ENCODE measurements at regions of chr12 and their contacts with region 1.

Region 1: DNA sequence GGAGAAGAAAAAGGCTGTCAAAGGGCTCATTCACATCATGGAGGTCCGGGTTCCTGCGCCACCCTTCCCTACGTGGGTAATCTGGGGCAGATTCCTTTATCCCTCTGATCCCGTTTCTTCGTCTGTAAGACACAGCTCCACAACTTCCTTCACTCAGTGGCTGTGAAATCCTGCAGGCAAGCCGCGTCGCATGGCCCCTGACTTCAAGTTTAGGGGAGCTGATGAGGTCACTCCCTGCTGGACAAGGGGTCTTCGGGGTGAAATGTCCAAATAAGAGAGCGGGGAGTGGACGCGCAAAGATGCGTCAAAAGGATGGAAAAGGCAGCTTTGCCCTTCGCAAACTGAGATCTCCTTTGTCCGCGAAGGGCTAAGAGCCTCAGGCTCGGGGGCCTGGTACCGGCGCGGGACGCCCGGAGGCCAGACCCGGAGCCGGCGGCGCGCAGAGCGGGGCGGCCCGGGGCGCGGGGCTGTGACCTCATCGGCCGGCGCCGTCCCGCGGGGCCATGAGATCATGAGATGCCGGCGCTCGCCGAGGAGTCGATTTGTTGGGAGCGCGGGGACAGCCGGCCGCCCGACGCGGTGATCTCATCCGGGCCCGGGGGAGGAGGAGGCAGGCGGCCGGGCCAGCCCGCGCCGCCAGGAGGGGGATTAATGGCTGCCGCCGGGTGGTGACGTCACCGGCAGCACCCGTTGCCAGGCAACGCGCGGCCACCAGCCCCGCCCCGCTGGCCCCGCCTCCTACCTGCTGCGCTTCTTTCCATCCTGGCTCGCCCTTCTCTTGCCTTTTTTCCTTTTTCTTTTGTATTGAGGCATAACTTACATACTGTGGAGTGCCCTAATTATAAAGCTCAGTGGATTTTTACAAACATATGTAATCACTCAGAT is 62.1 kb downstream of the HRK start:
- DNase-seq: peak; percentile 94
- ATAC-seq: peak; percentile 96
- H3K4me3 Mint-ChIP-seq: peak overlapping the region; percentile 91
- H3K27ac Mint-ChIP-seq: peak overlapping the region; percentile 95
- H3K4me1 Mint-ChIP-seq: peaks cover 16% of the 10 kb centered on the region
- H3K27me3 Mint-ChIP-seq: no peaks in the 10 kb centered on the region

Region 2: GRCh38 chr12:116737774-116738700 is 81.2 kb before region 1 on chr12 and contains the starts of genes RNFT2 and SPRING1:
- CTCF ChIA-PET with region 1: no interaction called
- POLR2A ChIA-PET with region 1: no interaction called
- intact Hi-C with region 1: loop called (anchors 1 kb)
- DNase-seq: peak; percentile 99
- ATAC-seq: peak; percentile 99
- H3K4me3 Mint-ChIP-seq: peak within 1 kb of the TSS; percentile 85
- H3K27ac Mint-ChIP-seq: peak within 1 kb of the TSS; percentile 61
- H3K4me1 Mint-ChIP-seq: peaks cover 22% of the 10 kb centered on the region
- H3K27me3 Mint-ChIP-seq: no peaks in the 10 kb centered on the region
- total RNA-seq, gene RNFT2: 14.7 to 15.0 TPM
- total RNA-seq, gene SPRING1: 15.3 to 17.4 TPM

Region 3: GRCh38 chr12:116955382-116956021 is 136.3 kb after region 1 on chr12:
- CTCF ChIA-PET with region 1: no interaction called
- POLR2A ChIA-PET with region 1: no interaction called
- intact Hi-C with region 1: loop called in 1 of 2 experiments (anchors 1 kb)
- DNase-seq: peak; percentile 14
- ATAC-seq: no peak
- H3K4me3 Mint-ChIP-seq: no peak overlapping the region
- H3K27ac Mint-ChIP-seq: no peak overlapping the region
- H3K4me1 Mint-ChIP-seq: peaks cover 21% of the 10 kb centered on the region
- H3K27me3 Mint-ChIP-seq: no peaks in the 10 kb centered on the region

Region 4: GRCh38 chr12:117002051-117002817 is 183.0 kb after region 1 on chr12:
- CTCF ChIA-PET with region 1: no interaction called
- POLR2A ChIA-PET with region 1: no interaction called
- intact Hi-C with region 1: no loop called
- DNase-seq: no peak
- ATAC-seq: no peak
- H3K4me3 Mint-ChIP-seq: no peak overlapping the region
- H3K27ac Mint-ChIP-seq: no peak overlapping the region
- H3K4me1 Mint-ChIP-seq: no peaks in the 10 kb centered on the region
- H3K27me3 Mint-ChIP-seq: no peaks in the 10 kb centered on the region

Region 5: GRCh38 chr12:117134059-117134458 is 314.9 kb after region 1 on chr12:
- CTCF ChIA-PET with region 1: no interaction called
- POLR2A ChIA-PET with region 1: no interaction called
- intact Hi-C with region 1: loop called in 1 of 2 experiments (anchors 2 kb)
- DNase-seq: peak; percentile 81
- ATAC-seq: peak; percentile 88
- H3K4me3 Mint-ChIP-seq: peak overlapping the region; percentile 1
- H3K27ac Mint-ChIP-seq: peak overlapping the region; percentile 79
- H3K4me1 Mint-ChIP-seq: peaks cover 15% of the 10 kb centered on the region
- H3K27me3 Mint-ChIP-seq: no peaks in the 10 kb centered on the region